GM12878 (cell line): ENCODE measurements at regions of chr6 and their contacts with region 1.

Region 1: DNA sequence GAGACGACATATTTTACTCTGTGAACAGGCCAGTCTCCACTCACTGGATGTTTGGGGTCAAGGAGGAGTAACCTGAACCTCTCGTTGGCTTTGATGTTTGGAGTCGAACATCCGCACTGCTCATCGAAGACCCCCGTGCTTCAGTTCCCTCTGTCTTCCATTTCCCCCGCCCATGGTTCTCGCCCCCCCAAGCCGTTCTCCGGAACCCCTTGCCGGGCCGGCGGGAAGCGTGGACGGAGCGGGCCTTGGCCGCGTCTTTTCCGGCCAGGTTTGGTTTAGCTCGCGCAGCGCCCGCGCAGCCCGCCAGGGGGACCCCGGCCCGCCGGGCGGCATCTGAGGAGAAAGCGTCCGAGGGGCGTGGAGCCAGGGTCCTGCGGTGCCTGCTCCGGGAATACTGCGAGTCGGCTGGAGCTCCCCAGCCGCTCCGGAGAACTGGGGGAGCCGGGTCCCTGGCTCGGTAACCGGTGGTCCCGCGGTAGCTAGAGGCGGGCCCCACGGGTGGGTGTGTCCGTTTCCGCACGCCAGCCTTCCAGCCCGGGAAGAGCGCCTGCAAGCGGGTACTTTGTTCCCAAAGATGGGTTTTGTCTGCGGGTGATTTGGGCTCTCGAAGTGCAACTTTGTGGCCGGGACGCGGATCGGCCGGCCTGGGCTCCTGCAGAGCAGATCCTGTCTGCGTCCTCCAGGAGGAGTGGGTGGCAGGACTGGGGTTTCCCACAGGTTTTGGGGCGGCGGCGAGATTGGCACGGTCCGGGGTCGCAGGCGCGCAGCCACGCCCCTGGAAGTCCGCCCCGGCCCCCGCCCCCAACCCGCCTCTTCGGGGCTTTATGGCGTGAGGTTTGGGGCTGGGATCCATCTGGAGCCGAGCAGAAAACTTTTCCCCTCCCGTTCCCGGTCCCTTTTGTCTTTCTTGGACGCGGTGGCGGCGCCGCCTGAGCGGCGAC is at the start of gene TMEM200A:
- DNase-seq: no peak
- ATAC-seq: peak; percentile 80
- H3K4me3 ChIP-seq: peak within 1 kb of the TSS; percentile 50; the same call in 1 of the 2 replicates
- H3K27ac ChIP-seq: no peak within 1 kb of the TSS
- H3K4me1 ChIP-seq: no peaks in the 10 kb centered on the region
- H3K27me3 ChIP-seq: peaks cover 0 to 7% of the 10 kb centered on the region in 2 experiments; a peak in 1 of 4 replicates
- CTCF ChIP-seq: peak; percentile 48 to 69 (median 67); a peak in 5 of 6 replicates
- EP300 ChIP-seq: no peak
- POLR2A ChIP-seq: no peak
- RAD21 ChIP-seq: peak; percentile 56
- polyA plus RNA-seq, gene TMEM200A: 6.0 to 10.0 TPM

Region 2: GRCh38 chr6:130381459-130382380 is 16.3 kb after region 1 on chr6:
- CTCF ChIA-PET with region 1: interaction called, 32 read pairs
- POLR2A ChIA-PET with region 1: interaction called, 6 read pairs
- RAD21 ChIA-PET with region 1: interaction called, 27 read pairs
- SMC1A ChIA-PET with region 1: interaction called, 17 read pairs
- in situ Hi-C with region 1: no loop called
- intact Hi-C with region 1: no loop called
- DNase-seq: no peak
- ATAC-seq: peak; percentile 84
- H3K4me3 ChIP-seq: no peak overlapping the region
- H3K27ac ChIP-seq: no peak overlapping the region
- H3K4me1 ChIP-seq: no peaks in the 10 kb centered on the region
- H3K27me3 ChIP-seq: no peaks in the 10 kb centered on the region
- CTCF ChIP-seq: peak; percentile 12 to 32 (median 12); a peak in 3 of 6 replicates
- EP300 ChIP-seq: no peak
- POLR2A ChIP-seq: no peak
- RAD21 ChIP-seq: peak; percentile 30; the same call in 1 of the 2 replicates

Region 3: GRCh38 chr6:130525408-130525807 is 160.0 kb after region 1 on chr6:
- CTCF ChIA-PET with region 1: interaction called, 3 read pairs
- POLR2A ChIA-PET with region 1: interaction called, 5 read pairs
- RAD21 ChIA-PET with region 1: interaction called, 6 read pairs
- SMC1A ChIA-PET with region 1: interaction called, 16 read pairs
- in situ Hi-C with region 1: no loop called
- intact Hi-C with region 1: no loop called
- DNase-seq: no peak
- ATAC-seq: peak; percentile 64
- H3K4me3 ChIP-seq: no peak overlapping the region
- H3K27ac ChIP-seq: no peak overlapping the region
- H3K4me1 ChIP-seq: peaks cover 2% of the 10 kb centered on the region; the same call in 1 of the 2 replicates
- H3K27me3 ChIP-seq: no peaks in the 10 kb centered on the region
- CTCF ChIP-seq: no peak
- EP300 ChIP-seq: no peak
- POLR2A ChIP-seq: no peak
- RAD21 ChIP-seq: peak; percentile 24; the same call in 1 of the 2 replicates

Region 4: GRCh38 chr6:132167929-132168892 is 1802.8 kb after region 1 on chr6:
- CTCF ChIA-PET with region 1: no interaction called
- POLR2A ChIA-PET with region 1: no interaction called
- RAD21 ChIA-PET with region 1: no interaction called
- SMC1A ChIA-PET with region 1: no interaction called
- in situ Hi-C with region 1: no loop called
- intact Hi-C with region 1: no loop called
- DNase-seq: no peak
- ATAC-seq: no peak
- H3K4me3 ChIP-seq: no peak overlapping the region
- H3K27ac ChIP-seq: no peak overlapping the region
- H3K4me1 ChIP-seq: no peaks in the 10 kb centered on the region
- H3K27me3 ChIP-seq: no peaks in the 10 kb centered on the region
- CTCF ChIP-seq: no peak
- EP300 ChIP-seq: no peak
- POLR2A ChIP-seq: no peak
- RAD21 ChIP-seq: no peak